Activated T-helper 1 cell treated with anti-CD3 and anti-CD28 coated beads, Interleukin-12 subunit alpha, Interleukin-12 subunit beta, Interleukin-2, Interleukin-4 antibody, amounts not matched to agents 30 ng/mL and 10 ng/mL and 1 ng/mL, durations not matched to agents 14 hours and 24 hours and 36 hours (primary cell): ENCODE measurements at regions of chr10 and their contacts with region 1.

Region 1: DNA sequence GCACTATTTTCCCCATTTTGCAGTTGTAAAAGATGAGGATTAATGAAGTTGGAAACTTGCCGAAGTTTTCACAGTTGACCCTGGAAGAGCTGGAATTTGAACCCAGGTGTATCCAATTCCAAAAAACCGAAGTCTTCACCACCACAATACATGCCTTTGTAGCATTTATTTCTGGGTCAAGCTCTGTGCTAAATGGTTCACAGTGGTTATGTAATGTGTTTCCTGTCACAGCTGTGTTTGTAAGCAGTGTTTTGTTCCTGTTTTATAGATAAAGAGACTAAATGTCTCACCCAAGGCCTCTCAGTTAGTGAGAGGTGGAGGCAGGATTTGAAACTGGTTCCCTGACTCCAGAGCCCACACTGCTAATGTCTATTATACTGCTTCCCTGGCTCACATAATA is 17.6 kb downstream of the SFTPA2 start:
- DNase-seq: no peak
- H3K4me3 Mint-ChIP-seq: no peak overlapping the region
- H3K27ac Mint-ChIP-seq: no peak overlapping the region
- H3K4me1 Mint-ChIP-seq: peaks cover 45% of the 10 kb centered on the region
- H3K27me3 Mint-ChIP-seq: no peaks in the 10 kb centered on the region

Region 2: DNA sequence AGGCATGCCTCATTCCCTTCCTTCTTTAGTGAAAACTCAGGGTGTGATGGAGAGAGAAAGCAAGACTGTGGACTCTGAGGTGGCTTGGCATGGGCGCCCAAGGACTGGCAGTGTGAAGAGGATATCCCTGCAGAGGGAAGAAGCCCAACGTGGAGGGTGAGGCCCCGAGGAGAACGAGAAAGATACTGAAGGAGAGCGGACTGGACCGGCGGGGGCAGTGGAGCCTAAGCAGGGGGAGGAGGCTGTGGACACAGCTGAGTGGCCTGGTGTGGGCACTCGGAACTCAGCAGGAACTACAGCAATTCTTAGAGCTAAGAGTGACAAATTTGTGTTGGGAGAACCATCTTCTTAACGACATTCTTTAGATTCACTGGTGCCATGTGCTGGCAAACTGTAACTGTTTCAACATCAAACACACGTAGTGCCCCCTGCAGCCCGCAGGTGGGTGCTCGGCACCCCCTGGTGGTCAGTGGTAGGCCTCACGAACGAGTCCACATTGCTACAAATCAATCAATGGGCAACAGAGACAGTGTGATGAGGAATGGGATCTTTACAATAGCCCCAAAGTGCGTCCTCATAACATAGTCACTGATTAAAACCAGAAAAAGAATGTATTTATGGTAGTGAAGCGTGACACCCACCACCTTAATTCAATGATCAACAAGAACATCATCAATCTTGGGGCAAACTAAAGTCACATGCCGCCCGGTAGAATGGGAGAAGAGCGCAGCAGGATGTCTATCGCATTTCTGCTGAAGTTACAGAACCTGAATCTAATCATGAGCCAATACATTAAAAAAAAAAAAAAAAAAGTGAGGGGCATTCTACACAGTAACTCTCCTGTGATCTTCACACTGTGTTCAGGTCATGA is 66.1 kb after region 1 on chr10:
- intact Hi-C with region 1: loop called (anchors 1 kb)
- DNase-seq: peak; percentile 21
- H3K4me3 Mint-ChIP-seq: no peak overlapping the region
- H3K27ac Mint-ChIP-seq: no peak overlapping the region
- H3K4me1 Mint-ChIP-seq: peaks cover 11% of the 10 kb centered on the region
- H3K27me3 Mint-ChIP-seq: peaks cover 7% of the 10 kb centered on the region

Region 3: DNA sequence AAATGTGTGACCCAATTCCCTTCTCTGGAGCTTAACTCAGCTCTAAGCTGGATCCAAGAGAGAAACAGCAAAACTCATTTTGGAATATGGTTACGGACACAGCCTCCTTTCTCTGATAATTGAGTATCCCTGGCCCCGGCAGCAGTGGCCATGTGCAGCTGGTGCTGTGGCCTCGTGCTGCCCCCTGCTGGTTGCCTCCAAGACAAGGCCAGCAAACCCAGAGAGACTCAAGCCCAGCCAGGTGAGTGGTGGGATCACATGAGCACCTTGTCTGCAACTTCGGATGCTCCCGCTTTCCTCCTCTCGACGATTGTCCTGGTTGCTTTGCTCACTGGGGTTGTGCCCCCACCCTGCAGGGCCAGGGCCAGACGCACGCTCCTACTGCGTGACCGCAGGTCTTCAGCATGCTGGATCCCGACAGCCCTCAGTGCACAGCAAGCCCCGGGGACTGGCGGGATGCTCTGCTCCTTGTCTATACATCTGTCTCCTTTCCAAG is 386.8 kb after region 1 on chr10:
- intact Hi-C with region 1: loop called (anchors 1 kb)
- DNase-seq: peak; percentile 64
- H3K4me3 Mint-ChIP-seq: no peak overlapping the region
- H3K27ac Mint-ChIP-seq: no peak overlapping the region
- H3K4me1 Mint-ChIP-seq: no peaks in the 10 kb centered on the region
- H3K27me3 Mint-ChIP-seq: peaks cover 29% of the 10 kb centered on the region

Region 4: DNA sequence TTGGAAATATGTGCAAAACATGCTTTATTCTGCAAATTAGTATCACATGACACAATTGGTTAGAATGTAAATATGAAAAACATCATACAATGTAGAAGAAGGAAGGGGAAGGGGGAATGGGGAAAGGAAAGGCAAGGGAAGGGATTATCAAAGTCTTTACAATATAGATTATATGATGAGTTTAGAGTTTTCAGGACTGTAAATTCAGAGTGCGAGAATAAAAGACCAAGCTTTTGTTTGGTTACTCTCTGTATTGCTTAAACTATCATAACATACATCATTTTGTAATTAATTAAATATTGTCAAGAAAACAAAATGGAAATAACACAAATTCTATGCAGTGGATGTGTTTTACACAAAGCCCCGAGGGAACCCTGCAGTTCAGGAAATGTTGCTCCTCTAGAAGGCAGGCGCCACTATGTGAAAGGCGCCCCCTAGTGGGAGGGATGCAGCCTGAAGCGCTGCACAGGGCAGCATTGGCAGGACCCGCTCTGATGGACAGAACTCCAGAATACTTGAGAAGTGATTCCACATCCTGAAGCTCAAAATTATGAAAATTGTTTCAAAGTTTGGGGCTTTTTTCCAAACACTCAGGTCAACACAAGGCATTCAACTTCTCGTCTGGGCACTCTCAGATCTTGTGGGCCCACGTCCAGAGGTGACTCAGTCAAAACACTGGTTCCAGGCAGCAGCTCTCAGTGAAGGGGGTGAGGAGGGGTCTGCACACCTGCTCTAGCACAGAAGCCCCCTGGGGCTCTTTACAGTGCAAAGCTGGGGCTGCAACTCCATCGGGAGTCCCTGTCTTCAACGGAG is 504.2 kb after region 1 on chr10:
- intact Hi-C with region 1: loop called (anchors 1 kb)
- DNase-seq: peak; percentile 47
- H3K4me3 Mint-ChIP-seq: no peak overlapping the region
- H3K27ac Mint-ChIP-seq: no peak overlapping the region
- H3K4me1 Mint-ChIP-seq: peaks cover 5% of the 10 kb centered on the region
- H3K27me3 Mint-ChIP-seq: peaks cover 10% of the 10 kb centered on the region